ENCODE measurements at regions of chr10 and their contacts with region 1.

Region 1: DNA sequence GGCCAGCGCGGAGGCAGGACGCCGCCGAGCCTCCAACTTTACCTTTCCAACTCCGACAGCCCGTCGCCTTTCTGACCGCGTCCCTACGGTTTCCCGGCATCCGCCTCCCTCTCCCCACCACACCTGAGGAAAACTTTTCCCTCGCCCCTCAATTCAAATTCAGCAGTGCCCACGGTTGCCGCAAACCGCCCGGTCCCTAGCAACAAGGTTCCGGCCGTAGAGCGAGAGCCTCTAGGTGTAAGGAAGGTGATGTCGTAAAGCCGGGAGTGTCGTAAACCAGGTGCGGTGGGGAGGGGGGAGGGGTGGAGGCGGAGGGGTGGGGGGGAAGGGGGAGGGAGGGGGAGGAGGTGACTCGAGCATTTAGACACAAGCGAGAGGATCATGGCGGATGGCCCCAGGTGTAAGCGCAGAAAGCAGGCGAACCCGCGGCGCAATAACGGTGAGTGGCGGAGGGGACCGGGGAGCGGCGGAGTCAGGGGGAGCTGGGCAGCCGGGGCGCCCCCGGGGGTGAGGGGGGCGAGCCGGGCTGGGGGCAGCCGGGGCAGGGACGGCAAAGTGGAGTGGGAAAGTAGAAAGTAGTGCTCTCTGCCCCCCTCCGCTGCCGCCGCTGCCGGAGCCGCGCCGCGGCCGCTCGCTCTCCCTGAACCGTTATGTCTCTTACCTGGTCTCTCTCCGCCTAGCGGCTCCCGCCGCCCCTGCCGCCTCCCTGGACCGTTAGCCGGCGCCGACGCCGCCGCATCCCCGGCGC is at the start of gene ZEB1:
- DNase-seq: peak; percentile 94
- H3K4me3 Mint-ChIP-seq: peak within 1 kb of the TSS; percentile 98
- H3K27ac Mint-ChIP-seq: peak within 1 kb of the TSS; percentile 99
- H3K4me1 Mint-ChIP-seq: peaks cover 32% of the 10 kb centered on the region
- H3K27me3 Mint-ChIP-seq: no peaks in the 10 kb centered on the region
- total RNA-seq, gene ZEB1: 33.9 to 37.8 TPM

Region 2: GRCh38 chr10:30980951-30981616 is 337.9 kb before region 1 on chr10:
- CTCF ChIA-PET with region 1: no interaction called
- POLR2A ChIA-PET with region 1: no interaction called
- intact Hi-C with region 1: no loop called
- DNase-seq: no peak
- H3K4me3 Mint-ChIP-seq: no peak overlapping the region
- H3K27ac Mint-ChIP-seq: no peak overlapping the region
- H3K4me1 Mint-ChIP-seq: peaks cover 11% of the 10 kb centered on the region
- H3K27me3 Mint-ChIP-seq: no peaks in the 10 kb centered on the region

Region 3: GRCh38 chr10:31083765-31084184 is 235.3 kb before region 1 on chr10:
- CTCF ChIA-PET with region 1: interaction called, 6 read pairs
- POLR2A ChIA-PET with region 1: interaction called, 3 read pairs
- intact Hi-C with region 1: loop called (anchors 5 kb)
- DNase-seq: peak; percentile 79
- H3K4me3 Mint-ChIP-seq: no peak overlapping the region
- H3K27ac Mint-ChIP-seq: no peak overlapping the region
- H3K4me1 Mint-ChIP-seq: peaks cover 3% of the 10 kb centered on the region
- H3K27me3 Mint-ChIP-seq: no peaks in the 10 kb centered on the region

Region 4: DNA sequence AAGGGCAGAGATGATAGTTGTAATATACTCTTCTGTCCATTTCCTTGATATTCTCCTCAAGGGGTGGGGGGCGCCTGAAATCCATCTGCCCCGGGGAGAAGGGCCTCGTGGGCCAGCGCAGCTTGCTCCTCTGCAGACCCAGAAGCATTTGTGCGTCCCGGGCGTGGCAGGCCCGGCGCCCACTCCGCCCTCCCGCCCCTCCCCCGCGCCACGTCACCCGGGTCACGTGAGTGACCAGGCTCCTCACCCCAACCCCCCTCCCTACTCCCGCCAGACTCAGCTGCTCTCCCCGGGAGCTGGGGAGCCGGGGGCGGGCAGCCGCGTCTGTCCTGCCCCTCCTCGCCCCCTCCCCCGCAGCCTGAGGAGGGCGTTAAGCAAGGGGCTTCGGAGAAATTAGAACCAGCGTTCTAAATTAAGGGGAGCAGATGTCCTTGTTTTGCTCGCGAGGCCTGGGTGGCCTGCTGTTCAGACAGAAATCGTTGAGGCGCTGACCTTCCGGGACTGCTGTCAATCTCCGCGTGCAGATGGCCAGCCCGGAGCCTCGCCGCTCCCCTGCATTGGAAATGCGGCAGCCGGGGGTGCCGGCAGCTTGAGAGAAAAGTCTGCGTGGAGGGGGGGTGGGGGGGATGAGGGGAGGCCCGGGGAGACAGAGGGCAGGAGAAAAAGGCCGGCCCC is 185.3 kb before region 1 on chr10:
- CTCF ChIA-PET with region 1: no interaction called
- POLR2A ChIA-PET with region 1: no interaction called
- intact Hi-C with region 1: loop called (anchors 2 kb)
- DNase-seq: peak; percentile 83
- H3K4me3 Mint-ChIP-seq: peak overlapping the region; percentile 65
- H3K27ac Mint-ChIP-seq: peak overlapping the region; percentile 62
- H3K4me1 Mint-ChIP-seq: peaks cover 42% of the 10 kb centered on the region
- H3K27me3 Mint-ChIP-seq: no peaks in the 10 kb centered on the region

Region 5: DNA sequence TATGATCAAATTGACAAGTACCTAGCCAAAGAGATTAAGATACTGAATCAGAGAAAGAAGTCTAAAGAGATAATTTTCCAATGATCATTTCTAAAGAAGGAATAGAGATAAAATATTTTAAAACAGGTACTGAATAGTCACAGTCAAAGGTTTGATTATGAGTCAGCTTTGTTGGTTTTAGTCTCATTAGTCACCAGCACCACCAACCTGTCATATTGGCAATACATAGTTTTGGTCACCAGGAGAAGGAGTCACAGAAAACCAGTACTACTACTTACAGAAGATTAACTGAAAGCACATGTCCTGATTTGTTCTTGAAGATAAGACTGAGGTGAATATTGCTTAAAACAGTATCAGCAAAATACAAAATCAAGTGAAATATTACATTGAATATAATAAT is 34.5 kb after region 1 on chr10:
- CTCF ChIA-PET with region 1: no interaction called
- POLR2A ChIA-PET with region 1: no interaction called
- intact Hi-C with region 1: loop called (anchors 1 kb)
- DNase-seq: peak; percentile 21
- H3K4me3 Mint-ChIP-seq: no peak overlapping the region
- H3K27ac Mint-ChIP-seq: no peak overlapping the region
- H3K4me1 Mint-ChIP-seq: peaks cover 52% of the 10 kb centered on the region
- H3K27me3 Mint-ChIP-seq: no peaks in the 10 kb centered on the region

Region 6: GRCh38 chr10:31479752-31480151 is 160.7 kb after region 1 on chr10:
- CTCF ChIA-PET with region 1: no interaction called
- POLR2A ChIA-PET with region 1: no interaction called
- intact Hi-C with region 1: no loop called
- DNase-seq: no peak
- H3K4me3 Mint-ChIP-seq: no peak overlapping the region
- H3K27ac Mint-ChIP-seq: no peak overlapping the region
- H3K4me1 Mint-ChIP-seq: peaks cover 20% of the 10 kb centered on the region
- H3K27me3 Mint-ChIP-seq: no peaks in the 10 kb centered on the region

Region 7: DNA sequence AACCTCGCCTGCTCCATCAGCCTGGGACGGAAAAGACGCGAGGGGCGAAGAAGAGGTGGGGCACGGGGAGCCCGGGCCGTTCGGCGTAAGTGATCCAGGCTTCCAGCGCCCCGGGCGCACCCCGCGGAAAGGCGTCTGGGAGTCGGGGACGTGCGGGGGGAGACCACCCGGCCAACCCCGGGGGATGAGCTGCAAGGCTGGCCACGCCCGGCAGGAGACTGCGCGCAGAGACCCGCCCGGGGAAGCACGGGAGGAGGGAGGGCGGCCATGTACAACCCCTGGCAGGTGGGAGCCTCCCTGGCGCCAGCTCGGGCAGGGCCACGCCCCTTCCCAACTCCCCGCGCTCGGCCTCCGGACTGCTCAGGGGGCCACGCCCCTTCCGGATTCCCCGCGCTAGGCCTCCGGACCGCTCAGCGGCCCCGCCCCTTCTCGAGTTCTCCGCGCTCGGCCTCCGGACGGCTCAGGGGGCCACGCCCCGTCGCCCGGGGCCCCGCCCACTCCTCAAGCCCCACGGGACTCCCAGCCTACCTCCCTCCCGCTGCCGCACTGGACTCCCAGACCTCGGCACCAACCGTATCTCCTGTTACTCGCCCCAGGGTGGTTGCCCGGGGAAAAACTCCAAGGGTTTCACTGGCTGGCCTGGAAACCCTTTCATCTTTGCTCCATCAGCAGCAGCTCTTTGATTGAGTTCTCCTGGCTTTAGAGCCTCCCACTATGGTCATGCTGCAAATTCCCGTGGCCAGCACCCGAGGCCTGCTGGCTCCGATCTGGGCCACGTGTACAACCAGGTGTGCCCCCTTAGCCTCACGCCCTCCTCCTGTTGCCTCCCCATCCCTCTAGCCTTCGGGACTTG is 284.4 kb after region 1 on chr10:
- CTCF ChIA-PET with region 1: no interaction called
- POLR2A ChIA-PET with region 1: no interaction called
- intact Hi-C with region 1: loop called (anchors 2 kb)
- DNase-seq: peak; percentile 93
- H3K4me3 Mint-ChIP-seq: peak overlapping the region; percentile 77
- H3K27ac Mint-ChIP-seq: no peak overlapping the region
- H3K4me1 Mint-ChIP-seq: peaks cover 25% of the 10 kb centered on the region
- H3K27me3 Mint-ChIP-seq: peaks cover 1% of the 10 kb centered on the region

Measured in activated CD4-positive, alpha-beta memory T cell treated with anti-CD3 and anti-CD28 coated beads for 36 hours (primary cell).